ENCODE measurements at regions of chr2 and their contacts with region 1.

Region 1: GRCh38 chr2:78676921-78677696 is 348.4 kb upstream of the REG3G start:
- DNase-seq: no peak
- H3K4me3 Mint-ChIP-seq: no peak overlapping the region
- H3K27ac Mint-ChIP-seq: no peak overlapping the region
- H3K4me1 Mint-ChIP-seq: no peaks in the 10 kb centered on the region
- H3K27me3 Mint-ChIP-seq: no peaks in the 10 kb centered on the region

Region 2: DNA sequence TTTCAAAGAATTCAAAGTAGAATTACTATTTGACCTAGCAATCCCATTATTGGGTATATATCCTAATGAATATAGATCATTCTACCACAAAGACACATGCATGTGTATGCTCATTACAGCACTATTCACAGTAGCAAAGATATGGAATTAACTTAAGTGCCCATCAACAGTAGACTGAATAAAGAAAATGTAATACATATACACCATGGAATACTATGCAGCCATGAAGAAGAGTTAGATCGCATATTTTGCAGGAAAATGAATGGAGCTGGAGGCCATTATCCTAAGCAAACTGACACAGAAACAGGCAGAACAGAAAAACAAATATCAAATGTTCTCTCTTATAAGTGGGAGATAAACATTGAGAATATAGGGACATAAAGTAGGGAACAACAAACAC is 170.8 kb before region 1 on chr2:
- intact Hi-C with region 1: no loop called
- DNase-seq: no peak
- H3K4me3 Mint-ChIP-seq: no peak overlapping the region
- H3K27ac Mint-ChIP-seq: no peak overlapping the region
- H3K4me1 Mint-ChIP-seq: no peaks in the 10 kb centered on the region
- H3K27me3 Mint-ChIP-seq: no peaks in the 10 kb centered on the region

Region 3: DNA sequence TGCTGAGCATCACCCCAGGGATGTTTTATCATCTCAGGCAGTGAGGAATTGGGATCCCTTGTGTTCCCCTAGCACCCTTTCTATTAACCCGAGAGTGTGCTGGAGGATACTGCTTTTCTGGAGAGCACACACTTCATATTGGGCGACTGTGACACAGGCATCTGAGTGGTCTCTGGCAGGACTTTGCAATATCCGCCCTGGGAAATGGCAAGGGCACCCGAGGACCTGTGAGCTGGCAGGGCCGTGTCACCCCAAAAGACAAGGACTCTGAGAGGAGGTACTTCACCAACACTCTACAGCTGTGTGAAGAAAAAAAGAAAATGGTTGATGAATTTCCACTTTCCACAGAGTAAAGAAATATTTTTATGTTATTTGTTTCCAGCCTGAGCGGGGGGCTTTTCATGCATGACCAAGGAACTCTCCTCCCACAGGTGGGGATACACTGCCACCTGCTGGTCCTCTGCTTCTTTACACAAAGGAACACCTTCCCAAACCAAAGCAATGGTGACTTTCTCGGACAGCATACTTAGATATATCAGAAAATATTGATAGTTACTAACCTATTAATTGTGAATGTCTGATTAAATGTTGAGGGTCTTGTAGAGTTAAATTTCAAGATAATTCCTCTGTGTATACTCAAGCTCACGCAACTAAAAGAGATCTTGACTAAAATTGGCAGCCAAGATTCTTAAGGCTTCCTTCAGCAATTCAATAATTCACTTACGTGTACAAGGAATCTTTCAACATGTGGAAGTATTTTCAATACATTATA is 302.5 kb after region 1 on chr2:
- intact Hi-C with region 1: loop called (anchors 5 kb)
- DNase-seq: peak; percentile 65
- H3K4me3 Mint-ChIP-seq: no peak overlapping the region
- H3K27ac Mint-ChIP-seq: no peak overlapping the region
- H3K4me1 Mint-ChIP-seq: no peaks in the 10 kb centered on the region
- H3K27me3 Mint-ChIP-seq: no peaks in the 10 kb centered on the region